A673 (cell line): ENCODE measurements at regions of chr22 and their contacts with region 1.

Region 1: DNA sequence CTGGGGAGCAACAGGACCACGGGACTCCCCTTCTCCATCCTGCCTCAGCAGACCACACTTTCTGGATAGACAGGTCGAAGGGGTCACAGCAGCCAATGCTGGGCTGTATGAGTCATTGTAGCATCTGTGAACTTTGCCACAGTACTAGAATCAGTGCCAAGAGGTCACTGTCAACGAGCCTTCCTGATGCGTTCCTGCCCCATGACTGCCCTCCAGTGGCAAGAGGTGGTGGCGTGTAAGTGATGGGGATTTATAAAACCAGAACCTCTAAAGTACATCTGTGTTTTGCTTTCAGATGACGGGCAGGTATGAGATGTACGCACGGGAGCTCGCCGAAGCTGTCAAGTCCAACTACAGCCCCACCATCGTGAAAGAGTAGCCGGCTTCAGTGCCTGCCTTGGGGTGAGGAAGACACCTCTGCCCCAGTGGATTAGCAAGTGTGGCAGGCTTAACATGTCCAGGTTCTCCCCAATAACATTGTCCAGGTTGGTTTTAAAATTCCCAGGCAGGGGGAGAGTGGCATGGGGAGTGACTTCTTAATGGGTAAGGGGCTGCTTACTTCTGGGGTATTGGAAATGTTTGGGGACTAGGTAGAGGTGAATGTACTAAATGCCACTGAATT is 29.4 kb downstream of the GUCD1 start:
- DNase-seq: peak; percentile 69
- H3K4me3 ChIP-seq: no peak overlapping the region
- H3K27ac ChIP-seq: no peak overlapping the region
- H3K4me1 ChIP-seq: no peaks in the 10 kb centered on the region
- H3K27me3 ChIP-seq: no peaks in the 10 kb centered on the region
- CTCF ChIP-seq: peak; percentile 94

Region 2: GRCh38 chr22:24101911-24102321 is 423.6 kb before region 1 on chr22:
- CTCF ChIA-PET with region 1: no interaction called
- POLR2A ChIA-PET with region 1: no interaction called
- intact Hi-C with region 1: no loop called
- DNase-seq: no peak
- H3K4me3 ChIP-seq: no peak overlapping the region
- H3K27ac ChIP-seq: no peak overlapping the region
- H3K4me1 ChIP-seq: no peaks in the 10 kb centered on the region
- H3K27me3 ChIP-seq: no peaks in the 10 kb centered on the region
- CTCF ChIP-seq: no peak

Region 3: GRCh38 chr22:24189249-24190158 is 336.0 kb before region 1 on chr22:
- CTCF ChIA-PET with region 1: no interaction called
- POLR2A ChIA-PET with region 1: no interaction called
- intact Hi-C with region 1: loop called (anchors 5 kb)
- DNase-seq: peak; percentile 43
- H3K4me3 ChIP-seq: no peak overlapping the region
- H3K27ac ChIP-seq: no peak overlapping the region
- H3K4me1 ChIP-seq: no peaks in the 10 kb centered on the region
- H3K27me3 ChIP-seq: no peaks in the 10 kb centered on the region
- CTCF ChIP-seq: peak; percentile 71